ENCODE measurements at regions of chr2 and their contacts with region 1.

Region 1: GRCh38 chr2:9142551-9143263 is 63.9 kb upstream of the ASAP2 start:
- DNase-seq: peak; percentile 77 to 88 (median 87)
- H3K4me3 ChIP-seq: peak overlapping the region in 4 of 7 experiments; percentile 5 to 56 (median 50)
- H3K27ac ChIP-seq: no peak overlapping the region
- H3K4me1 ChIP-seq: peaks cover 0 to 8% (median 6%) of the 10 kb centered on the region in 4 experiments
- H3K27me3 ChIP-seq: peaks cover 0 to 9% (median 4%) of the 10 kb centered on the region in 5 experiments

Region 2: GRCh38 chr2:8872821-8873432 is 269.8 kb before region 1 on chr2:
- CTCF ChIA-PET with region 1: interaction called, 26 read pairs
- POLR2A ChIA-PET with region 1: no interaction called
- DNase-seq: peak; percentile 65 to 76 (median 71)
- H3K4me3 ChIP-seq: no peak overlapping the region
- H3K27ac ChIP-seq: no peak overlapping the region
- H3K4me1 ChIP-seq: no peaks in the 10 kb centered on the region
- H3K27me3 ChIP-seq: no peaks in the 10 kb centered on the region

Region 3: DNA sequence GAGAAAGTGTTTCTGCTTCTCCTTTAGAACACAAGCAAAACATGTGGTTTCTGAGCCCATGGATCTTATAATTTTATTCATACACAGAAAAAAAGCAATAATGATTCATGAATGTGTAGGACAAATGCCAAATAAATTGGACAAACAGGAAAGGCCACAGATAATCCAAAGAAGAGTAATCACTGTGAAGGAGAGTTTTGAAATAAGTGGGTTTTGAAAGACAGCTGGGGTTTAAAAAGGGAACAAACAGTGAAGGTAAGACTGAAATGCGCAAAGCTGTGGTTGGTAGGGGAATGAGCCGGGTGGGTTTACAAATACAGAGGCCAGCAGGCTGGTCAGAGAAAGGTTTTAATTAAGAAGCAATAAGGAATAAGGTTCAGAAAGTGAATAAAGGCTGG is 89.2 kb before region 1 on chr2:
- CTCF ChIA-PET with region 1: no interaction called
- POLR2A ChIA-PET with region 1: no interaction called
- DNase-seq: peak in 2 of 3 donors; percentile 9 to 15
- H3K4me3 ChIP-seq: no peak overlapping the region
- H3K27ac ChIP-seq: no peak overlapping the region
- H3K4me1 ChIP-seq: peaks cover 0 to 12% (median 0%) of the 10 kb centered on the region in 4 experiments
- H3K27me3 ChIP-seq: no peaks in the 10 kb centered on the region

Region 4: DNA sequence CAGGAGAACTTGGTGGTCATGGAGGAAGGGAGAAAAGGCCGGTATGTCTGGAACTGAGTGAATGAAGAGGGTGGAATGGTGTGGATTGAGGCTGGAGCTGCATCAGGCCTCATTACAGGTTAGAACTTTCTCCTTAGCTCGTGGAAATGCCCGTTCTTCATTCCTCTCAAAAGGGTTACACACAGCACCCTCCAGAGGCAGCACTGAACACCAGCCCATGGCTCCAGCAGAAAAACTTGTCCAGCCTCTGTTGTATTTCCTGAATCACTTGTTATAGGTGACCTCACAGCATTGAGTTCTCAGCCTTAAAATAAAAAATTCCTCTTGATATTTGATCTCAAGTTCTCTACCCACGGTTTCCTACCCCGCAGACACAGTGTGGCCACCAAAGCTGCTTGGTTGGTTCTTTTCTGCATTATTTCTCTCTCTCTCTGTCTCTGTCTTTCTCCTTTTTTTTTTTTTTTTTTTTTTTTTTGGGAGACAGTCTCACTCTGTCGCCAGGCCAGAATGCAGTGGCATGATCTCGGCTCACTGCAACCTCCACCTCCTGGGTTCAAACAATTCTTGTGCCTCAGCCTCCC is 191.0 kb after region 1 on chr2:
- CTCF ChIA-PET with region 1: interaction called, 32 read pairs
- POLR2A ChIA-PET with region 1: no interaction called
- DNase-seq: peak; percentile 74 to 86 (median 86)
- H3K4me3 ChIP-seq: no peak overlapping the region
- H3K27ac ChIP-seq: no peak overlapping the region
- H3K4me1 ChIP-seq: peaks cover 0 to 43% (median 27%) of the 10 kb centered on the region in 4 experiments
- H3K27me3 ChIP-seq: no peaks in the 10 kb centered on the region

Measured in common myeloid progenitor, CD34-positive (primary cell).